ENCODE measurements at regions of chr6 and their contacts with region 1.

Region 1: DNA sequence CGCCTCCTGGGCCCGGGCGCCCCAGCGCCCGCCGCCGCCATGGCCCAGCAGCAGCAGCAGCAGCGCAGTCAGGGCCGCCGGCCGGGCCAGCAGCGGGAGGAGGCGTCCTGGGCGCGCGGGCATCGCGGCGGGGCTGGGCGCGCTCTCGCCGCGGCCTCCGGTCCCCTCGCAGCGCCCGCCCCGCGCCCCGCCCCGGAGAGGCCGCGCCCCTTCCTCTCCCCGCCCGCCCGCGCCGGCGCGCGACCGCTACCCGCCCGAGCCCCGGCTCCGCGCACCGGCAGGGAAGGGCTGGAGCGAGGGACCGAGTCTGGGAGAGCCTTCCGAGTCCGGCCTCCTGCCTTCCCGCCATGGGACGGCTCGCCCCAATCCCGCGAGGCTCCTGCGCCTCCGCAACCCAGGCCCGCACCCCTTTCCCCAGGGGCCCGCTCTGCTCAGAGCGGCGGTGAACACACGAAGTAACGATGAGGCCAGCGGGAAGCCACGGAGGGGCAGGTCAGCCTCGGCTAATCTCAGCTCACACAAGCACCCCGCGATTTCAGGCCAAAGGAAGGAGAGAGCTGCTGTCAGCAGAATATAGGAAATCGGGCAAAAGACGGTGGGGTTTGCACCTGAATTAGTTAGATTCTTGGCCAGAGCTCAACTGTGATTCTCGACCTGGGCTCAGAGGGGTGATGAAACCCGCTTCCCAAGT is at the start of gene TXNDC5:
- DNase-seq: peak; percentile 62
- ATAC-seq: peak; percentile 94
- H3K4me3 ChIP-seq: peak within 1 kb of the TSS; percentile 96
- H3K27ac ChIP-seq: peak within 1 kb of the TSS; percentile 81
- H3K4me1 ChIP-seq: peaks cover 6% of the 10 kb centered on the region; the same call in 1 of the 2 replicates
- H3K27me3 ChIP-seq: peaks cover 29% of the 10 kb centered on the region
- CTCF ChIP-seq: no peak
- POLR2A ChIP-seq: no peak
- RAD21 ChIP-seq: no peak
- total RNA-seq, gene TXNDC5: 418 and 439 TPM in 2 replicates

Region 2: GRCh38 chr6:7894262-7895124 is 16.3 kb before region 1 on chr6:
- CTCF ChIA-PET with region 1: no interaction called
- POLR2A ChIA-PET with region 1: no interaction called
- dilution Hi-C with region 1: no loop called
- in situ Hi-C with region 1: no loop called
- intact Hi-C with region 1: no loop called
- DNase-seq: no peak
- ATAC-seq: no peak
- H3K4me3 ChIP-seq: no peak overlapping the region
- H3K27ac ChIP-seq: no peak overlapping the region
- H3K4me1 ChIP-seq: no peaks in the 10 kb centered on the region
- H3K27me3 ChIP-seq: no peaks in the 10 kb centered on the region
- CTCF ChIP-seq: no peak
- POLR2A ChIP-seq: no peak
- RAD21 ChIP-seq: no peak

Region 3: DNA sequence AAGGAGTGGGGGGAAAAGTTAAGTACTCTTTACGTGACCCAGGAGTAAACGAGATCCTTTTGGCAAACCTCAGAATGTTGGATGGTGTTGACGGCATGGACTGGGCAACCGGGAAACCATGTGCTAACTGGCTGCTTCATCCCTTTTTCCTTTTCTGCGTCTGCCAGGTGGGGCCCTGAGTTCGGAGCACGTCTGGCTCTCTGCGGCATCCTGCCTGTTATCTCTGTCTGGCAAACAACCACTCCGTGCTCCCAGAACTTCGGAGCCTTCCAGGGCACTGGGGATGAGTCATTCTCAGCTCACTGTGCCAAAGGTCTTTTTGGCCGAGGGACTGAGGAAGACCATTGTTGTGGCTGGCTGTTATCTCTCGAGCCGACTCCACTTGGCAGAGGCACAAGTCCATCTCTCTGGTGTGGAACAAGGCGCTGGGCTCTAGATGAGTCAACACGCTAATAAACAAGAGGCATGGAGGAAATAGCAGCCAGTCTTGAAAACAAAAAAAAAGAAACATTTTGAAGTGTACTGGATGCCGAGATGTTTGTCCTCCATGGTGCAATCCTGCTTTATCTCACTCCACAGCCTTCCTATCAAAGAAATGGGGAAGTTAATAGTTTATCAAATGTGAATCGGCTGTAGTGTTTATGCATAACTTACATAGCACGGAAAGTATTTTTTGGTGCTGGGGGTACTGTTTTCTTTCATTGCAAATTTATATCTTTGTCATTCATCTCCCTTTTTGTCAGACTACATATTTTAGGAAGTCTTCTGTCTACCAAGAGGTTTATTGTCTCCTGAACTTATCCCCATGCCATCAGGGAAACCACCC is 64.4 kb after region 1 on chr6:
- CTCF ChIA-PET with region 1: no interaction called
- POLR2A ChIA-PET with region 1: no interaction called
- dilution Hi-C with region 1: no loop called
- in situ Hi-C with region 1: no loop called
- intact Hi-C with region 1: loop called (anchors 5 kb)
- DNase-seq: peak; percentile 92
- ATAC-seq: peak; percentile 94
- H3K4me3 ChIP-seq: peak overlapping the region; percentile 3; the same call in 1 of the 2 replicates
- H3K27ac ChIP-seq: no peak overlapping the region
- H3K4me1 ChIP-seq: peaks cover 2% of the 10 kb centered on the region; the same call in 1 of the 2 replicates
- H3K27me3 ChIP-seq: no peaks in the 10 kb centered on the region
- CTCF ChIP-seq: no peak
- POLR2A ChIP-seq: no peak
- RAD21 ChIP-seq: no peak

Region 4: GRCh38 chr6:7992002-7992815 is 81.4 kb after region 1 on chr6:
- CTCF ChIA-PET with region 1: interaction called, 3 read pairs
- POLR2A ChIA-PET with region 1: no interaction called
- dilution Hi-C with region 1: no loop called
- in situ Hi-C with region 1: no loop called
- intact Hi-C with region 1: loop called (anchors 1 kb)
- DNase-seq: peak; percentile 92
- ATAC-seq: peak; percentile 87
- H3K4me3 ChIP-seq: peak overlapping the region; percentile 26; the same call in 1 of the 2 replicates
- H3K27ac ChIP-seq: peak overlapping the region; percentile 89
- H3K4me1 ChIP-seq: peaks cover 6% of the 10 kb centered on the region
- H3K27me3 ChIP-seq: no peaks in the 10 kb centered on the region
- CTCF ChIP-seq: peak; percentile 56
- POLR2A ChIP-seq: no peak
- RAD21 ChIP-seq: peak; percentile 57

Region 5: GRCh38 chr6:8006208-8006607 is 95.4 kb after region 1 on chr6:
- CTCF ChIA-PET with region 1: interaction called, 4 read pairs
- POLR2A ChIA-PET with region 1: no interaction called
- dilution Hi-C with region 1: no loop called
- in situ Hi-C with region 1: no loop called
- intact Hi-C with region 1: loop called (anchors 5 kb)
- DNase-seq: peak; percentile 51
- ATAC-seq: peak; percentile 68; the same call in 1 of the 2 replicates
- H3K4me3 ChIP-seq: no peak overlapping the region
- H3K27ac ChIP-seq: no peak overlapping the region
- H3K4me1 ChIP-seq: no peaks in the 10 kb centered on the region
- H3K27me3 ChIP-seq: no peaks in the 10 kb centered on the region
- CTCF ChIP-seq: peak; percentile 66
- POLR2A ChIP-seq: no peak
- RAD21 ChIP-seq: peak; percentile 75

Measured in IMR-90 (cell line).